Tibial artery (tissue), 4 donors: ENCODE measurements at regions of chr7 and their contacts with region 1.

Region 1: DNA sequence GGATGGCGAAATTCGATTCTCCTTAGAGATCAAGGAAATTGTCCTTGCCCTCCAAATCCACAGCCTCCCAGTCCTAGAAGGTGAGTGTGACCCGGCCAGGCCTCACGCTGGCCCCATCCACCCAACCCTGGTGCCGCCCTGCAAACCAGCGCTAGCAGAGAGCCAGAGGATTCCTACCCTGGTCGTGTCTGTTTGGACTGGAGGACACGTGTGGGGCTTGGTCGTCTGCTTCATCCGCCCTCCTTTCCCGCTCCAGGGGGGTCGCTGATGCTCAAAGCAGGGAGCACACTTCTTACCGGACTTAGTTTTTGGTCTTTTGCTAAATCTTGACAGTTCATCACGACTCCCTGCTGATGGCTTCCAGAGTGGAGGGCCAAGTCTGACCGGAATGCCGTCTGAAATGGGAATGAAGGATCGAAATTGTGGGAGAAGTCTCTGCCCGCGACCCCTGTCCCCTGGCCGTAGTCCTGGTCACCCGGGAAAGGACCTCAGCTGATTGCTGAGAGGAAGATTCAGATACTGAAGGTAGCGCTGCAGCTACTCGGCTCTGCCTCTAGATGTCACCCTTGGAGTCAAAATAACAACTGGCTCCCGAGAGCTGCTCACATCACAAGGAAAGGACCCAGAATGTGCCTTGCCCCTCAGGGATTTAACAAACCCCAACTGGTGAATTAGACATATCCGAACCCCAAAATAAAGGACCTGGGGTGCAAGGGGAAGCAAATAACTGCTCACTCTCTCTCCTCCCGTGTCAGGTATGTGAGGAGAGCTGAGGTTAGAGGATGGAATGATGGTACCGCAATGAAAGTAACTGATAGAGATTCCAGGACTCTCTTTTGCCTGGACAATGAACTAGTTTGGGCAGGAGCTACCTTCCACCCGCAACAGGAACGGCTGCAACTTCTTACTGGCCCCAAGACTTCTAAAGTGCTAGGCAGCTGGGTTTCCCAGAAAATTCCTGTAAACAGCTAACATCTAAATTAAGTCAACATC is 23.5 kb upstream of the ORC5 start:
- DNase-seq: peak in 1 of 2 donors; percentile 27
- H3K4me3 ChIP-seq: no peak overlapping the region
- H3K27ac ChIP-seq: no peak overlapping the region
- H3K4me1 ChIP-seq: no peaks in the 10 kb centered on the region
- H3K27me3 ChIP-seq: peaks cover 0 to 4% of the 10 kb centered on the region in 2 donors
- CTCF ChIP-seq: peak; percentile 62 to 76

Region 2: GRCh38 chr7:103821092-103821491 is 410.3 kb before region 1 on chr7:
- intact Hi-C with region 1: no loop called
- DNase-seq: no peak
- H3K4me3 ChIP-seq: no peak overlapping the region
- H3K27ac ChIP-seq: no peak overlapping the region
- H3K4me1 ChIP-seq: no peaks in the 10 kb centered on the region
- H3K27me3 ChIP-seq: no peaks in the 10 kb centered on the region
- CTCF ChIP-seq: no peak

Region 3: GRCh38 chr7:104914421-104914820 is 683.1 kb after region 1 on chr7:
- intact Hi-C with region 1: loop called (anchors 10 kb)
- DNase-seq: no peak
- H3K4me3 ChIP-seq: no peak overlapping the region
- H3K27ac ChIP-seq: no peak overlapping the region
- H3K4me1 ChIP-seq: no peaks in the 10 kb centered on the region
- H3K27me3 ChIP-seq: no peaks in the 10 kb centered on the region
- CTCF ChIP-seq: no peak